ENCODE measurements at regions of chr12 and their contacts with region 1.

Region 1: DNA sequence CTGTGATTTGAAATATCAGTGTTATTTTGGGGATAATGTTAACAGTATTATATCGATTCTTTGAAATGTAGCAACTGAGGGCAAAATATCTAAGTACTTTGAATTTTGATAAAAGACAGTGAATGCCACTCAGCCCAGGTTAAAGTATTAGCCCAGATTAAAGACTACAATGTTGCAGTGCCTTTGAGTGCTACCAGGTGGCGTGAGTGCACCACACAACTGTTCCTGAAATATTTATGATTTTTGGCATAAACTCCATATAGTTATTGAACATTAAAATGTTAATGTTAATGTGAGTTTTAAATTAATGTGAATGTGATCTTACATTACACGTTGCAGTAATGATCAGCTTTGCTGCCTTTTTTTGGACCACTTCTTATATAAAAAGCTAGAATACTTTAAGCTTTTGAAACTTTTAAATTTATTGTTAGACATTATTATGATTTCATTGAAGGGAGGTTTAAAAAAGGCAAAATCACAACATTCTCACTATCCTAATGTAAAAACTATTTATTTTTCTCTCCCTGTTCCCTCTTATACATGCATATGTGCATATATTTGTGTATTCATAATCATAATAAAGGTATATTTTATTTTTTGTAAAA is 22.5 kb downstream of the MRPS35 start:
- DNase-seq: peak; percentile 53
- ATAC-seq: peak; percentile 57
- H3K4me3 Mint-ChIP-seq: no peak overlapping the region
- H3K27ac Mint-ChIP-seq: no peak overlapping the region
- H3K4me1 Mint-ChIP-seq: no peaks in the 10 kb centered on the region
- H3K27me3 Mint-ChIP-seq: no peaks in the 10 kb centered on the region

Region 2: DNA sequence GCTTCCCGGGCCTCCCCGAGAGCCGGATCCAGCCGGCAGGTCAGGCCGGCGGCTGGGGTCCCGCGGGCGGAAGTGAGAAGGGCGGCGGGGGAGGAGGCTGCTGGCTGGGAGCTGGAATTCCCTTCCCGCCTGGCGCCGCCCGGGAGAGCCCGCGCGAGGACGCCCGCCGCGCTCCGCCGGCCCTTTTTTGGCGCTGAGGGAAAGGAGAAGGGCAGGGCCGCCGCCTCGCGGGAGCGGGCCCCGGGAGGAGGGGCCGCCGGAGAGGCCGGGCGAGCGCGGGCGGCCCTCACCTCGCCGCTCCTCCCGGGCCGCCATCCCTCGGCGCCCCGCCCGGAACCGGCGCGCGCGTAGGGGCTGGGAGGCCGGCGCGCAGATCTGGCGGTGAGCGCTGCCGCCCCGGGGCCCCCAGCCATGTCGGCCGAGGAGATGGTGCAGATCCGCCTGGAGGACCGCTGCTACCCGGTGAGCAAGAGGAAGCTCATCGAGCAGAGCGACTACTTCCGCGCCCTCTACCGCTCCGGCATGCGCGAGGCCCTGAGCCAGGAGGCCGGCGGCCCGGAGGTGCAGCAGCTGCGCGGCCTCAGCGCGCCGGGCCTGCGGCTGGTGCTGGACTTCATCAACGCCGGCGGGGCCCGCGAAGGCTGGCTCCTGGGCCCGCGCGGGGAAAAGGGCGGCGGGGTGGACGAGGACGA is 46.9 kb after region 1 on chr12 and contains the starts of genes KLHL42 and MANSC4:
- CTCF ChIA-PET with region 1: interaction called, 12 read pairs
- POLR2A ChIA-PET with region 1: no interaction called
- DNase-seq: peak; percentile 77
- ATAC-seq: peak; percentile 90
- H3K4me3 Mint-ChIP-seq: peak within 1 kb of the TSS; percentile 81
- H3K27ac Mint-ChIP-seq: peak within 1 kb of the TSS; percentile 86
- H3K4me1 Mint-ChIP-seq: peaks cover 34% of the 10 kb centered on the region
- H3K27me3 Mint-ChIP-seq: peaks cover 7% of the 10 kb centered on the region
- total RNA-seq, gene KLHL42: 15.9 to 16.9 TPM
- total RNA-seq, gene MANSC4: not detected

Region 3: GRCh38 chr12:27940756-27941402 is 207.7 kb after region 1 on chr12:
- CTCF ChIA-PET with region 1: interaction called, 63 read pairs
- POLR2A ChIA-PET with region 1: no interaction called
- DNase-seq: peak; percentile 78
- ATAC-seq: peak; percentile 81
- H3K4me3 Mint-ChIP-seq: no peak overlapping the region
- H3K27ac Mint-ChIP-seq: no peak overlapping the region
- H3K4me1 Mint-ChIP-seq: no peaks in the 10 kb centered on the region
- H3K27me3 Mint-ChIP-seq: peaks cover 13% of the 10 kb centered on the region